ENCODE measurements at regions of chr16 and their contacts with region 1.

Region 1: DNA sequence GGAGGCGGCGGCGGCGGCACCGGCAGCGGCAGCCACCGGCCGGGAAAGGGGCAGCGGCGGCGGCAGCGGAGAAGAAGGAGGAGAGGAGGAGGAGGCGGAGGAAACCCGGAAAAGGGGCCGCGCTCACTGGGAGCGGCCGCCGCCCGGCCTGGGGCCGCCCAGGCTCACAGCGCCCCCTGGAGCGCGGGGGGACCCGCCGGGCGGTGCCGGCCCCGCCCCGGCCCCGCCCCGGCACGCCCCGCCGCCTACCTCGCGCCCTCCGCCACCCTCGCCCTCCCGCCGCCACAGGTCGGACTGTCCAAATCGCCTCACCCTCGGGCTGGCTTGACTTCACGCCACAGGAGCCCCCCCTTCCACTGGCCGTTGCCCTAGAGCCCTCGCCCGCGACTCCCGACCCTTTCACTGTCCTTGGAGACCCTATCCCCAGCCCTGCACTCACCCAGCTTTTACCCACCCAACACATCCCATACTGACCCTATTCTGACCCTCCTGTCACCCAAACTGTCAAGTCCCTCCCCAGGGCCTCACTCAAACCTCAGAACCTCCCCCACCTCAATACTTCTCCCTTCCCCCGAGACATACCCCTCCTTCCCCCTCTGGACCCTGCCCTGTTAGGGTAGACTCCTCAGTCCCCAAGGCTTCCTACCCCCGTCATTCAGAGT is at the start of gene CSNK2A2:
- DNase-seq: peak; percentile 59 to 67 (median 64)
- H3K4me3 ChIP-seq: peak within 1 kb of the TSS; percentile 40 to 64
- H3K4me3 Mint-ChIP-seq: peak within 1 kb of the TSS; percentile 82 to 93 (median 88)
- H3K27ac ChIP-seq: peak within 1 kb of the TSS; percentile 30
- H3K27ac Mint-ChIP-seq: peak within 1 kb of the TSS; percentile 79 to 88 (median 87)
- H3K4me1 ChIP-seq: peaks cover 43% of the 10 kb centered on the region
- H3K4me1 Mint-ChIP-seq: peaks cover 28 to 49% (median 39%) of the 10 kb centered on the region in 4 donors
- H3K27me3 ChIP-seq: no peaks in the 10 kb centered on the region
- H3K27me3 Mint-ChIP-seq: peaks cover 6 to 11% of the 10 kb centered on the region in 2 donors
- total RNA-seq, gene CSNK2A2: 63.5 to 63.6 TPM

Region 2: GRCh38 chr16:58025351-58026138 is 172.6 kb before region 1 on chr16 and contains the start of gene MMP15:
- CTCF ChIA-PET with region 1: no interaction called
- POLR2A ChIA-PET with region 1: no interaction called
- intact Hi-C with region 1: loop called (anchors 1 kb)
- DNase-seq: peak; percentile 50 to 77 (median 56)
- H3K4me3 ChIP-seq: peak within 1 kb of the TSS; percentile 11 to 53
- H3K4me3 Mint-ChIP-seq: peak within 1 kb of the TSS; percentile 89 to 99 (median 93)
- H3K27ac ChIP-seq: peak within 1 kb of the TSS; percentile 34
- H3K27ac Mint-ChIP-seq: peak within 1 kb of the TSS; percentile 81 to 93 (median 91)
- H3K4me1 ChIP-seq: peaks cover 19% of the 10 kb centered on the region
- H3K4me1 Mint-ChIP-seq: peaks cover 6 to 29% (median 18%) of the 10 kb centered on the region in 4 donors
- H3K27me3 ChIP-seq: no peaks in the 10 kb centered on the region
- H3K27me3 Mint-ChIP-seq: peaks cover 0 to 1% of the 10 kb centered on the region in 2 donors
- total RNA-seq, gene MMP15: 1.6 to 1.8 TPM

Region 3: GRCh38 chr16:58236231-58236690 is 38.1 kb after region 1 on chr16:
- CTCF ChIA-PET with region 1: no interaction called
- POLR2A ChIA-PET with region 1: no interaction called
- intact Hi-C with region 1: loop called (anchors 1 kb)
- DNase-seq: peak; percentile 42 to 52 (median 48)
- H3K4me3 ChIP-seq: peak overlapping the region; percentile 43 to 64
- H3K4me3 Mint-ChIP-seq: peak overlapping the region; percentile 84 to 93 (median 88)
- H3K27ac ChIP-seq: no peak overlapping the region
- H3K27ac Mint-ChIP-seq: peak overlapping the region in 2 of 7 donors; percentile 23 to 67
- H3K4me1 ChIP-seq: peaks cover 10% of the 10 kb centered on the region
- H3K4me1 Mint-ChIP-seq: peaks cover 3 to 13% (median 11%) of the 10 kb centered on the region in 4 donors
- H3K27me3 ChIP-seq: no peaks in the 10 kb centered on the region
- H3K27me3 Mint-ChIP-seq: peaks cover 12 to 17% of the 10 kb centered on the region in 2 donors

Region 4: DNA sequence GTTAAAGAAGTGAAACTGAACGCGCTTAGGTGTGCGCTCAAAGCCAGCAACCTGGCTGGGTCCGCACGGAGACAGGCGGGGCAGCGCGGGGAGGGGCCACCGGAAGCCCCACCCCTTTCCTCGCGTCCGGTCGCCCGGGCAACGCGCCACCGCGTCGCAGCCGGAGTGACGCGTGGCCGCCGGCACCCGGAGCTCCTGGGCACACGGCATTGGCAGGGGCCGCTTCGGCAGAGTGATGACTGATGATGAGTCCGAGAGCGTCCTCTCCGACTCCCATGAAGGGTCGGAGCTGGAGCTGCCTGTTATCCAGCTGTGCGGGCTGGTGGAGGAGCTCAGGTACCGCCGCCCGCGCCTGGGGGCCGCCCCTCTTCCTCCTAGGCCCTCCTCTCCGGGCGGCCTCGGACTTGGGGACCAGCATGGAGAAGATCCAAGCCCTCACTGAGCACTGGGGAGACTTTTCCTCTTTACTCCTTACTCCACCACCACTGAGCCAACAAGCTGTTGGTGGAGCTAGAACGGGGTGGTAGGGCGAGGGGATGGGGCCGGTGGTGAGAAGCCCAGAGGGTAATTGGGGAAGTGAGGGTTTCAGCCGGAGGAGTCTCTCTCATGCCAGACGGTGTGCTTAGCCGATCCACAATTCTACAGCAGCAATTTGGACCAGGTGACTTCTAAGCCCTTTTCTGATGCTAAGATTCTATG is 51.8 kb after region 1 on chr16:
- CTCF ChIA-PET with region 1: no interaction called
- POLR2A ChIA-PET with region 1: no interaction called
- intact Hi-C with region 1: loop called (anchors 1 kb)
- DNase-seq: peak; percentile 78 to 89 (median 87)
- H3K4me3 ChIP-seq: peak overlapping the region; percentile 55 to 58
- H3K4me3 Mint-ChIP-seq: peak overlapping the region; percentile 80 to 93 (median 85)
- H3K27ac ChIP-seq: no peak overlapping the region
- H3K27ac Mint-ChIP-seq: peak overlapping the region; percentile 64 to 91 (median 86)
- H3K4me1 ChIP-seq: peaks cover 12% of the 10 kb centered on the region
- H3K4me1 Mint-ChIP-seq: peaks cover 6 to 14% (median 10%) of the 10 kb centered on the region in 4 donors
- H3K27me3 ChIP-seq: no peaks in the 10 kb centered on the region
- H3K27me3 Mint-ChIP-seq: peaks cover 1 to 4% of the 10 kb centered on the region in 2 donors

Measured in CD4-positive, alpha-beta memory T cell (primary cell).